Dendritic cell treated with granulocyte-macrophage colony-stimulating factor and Interleukin-4, amounts not matched to agents 40 ng/mL and 50 ng/mL, for 4 days (primary cell): ENCODE measurements at regions of chr14 and their contacts with region 1.

Region 1: GRCh38 chr14:81710234-81710845 is 176.7 kb upstream of the SEL1L start:
- H3K4me3 Mint-ChIP-seq: no peak overlapping the region
- H3K27ac Mint-ChIP-seq: no peak overlapping the region
- H3K4me1 Mint-ChIP-seq: no peaks in the 10 kb centered on the region
- H3K27me3 Mint-ChIP-seq: no peaks in the 10 kb centered on the region

Region 2: DNA sequence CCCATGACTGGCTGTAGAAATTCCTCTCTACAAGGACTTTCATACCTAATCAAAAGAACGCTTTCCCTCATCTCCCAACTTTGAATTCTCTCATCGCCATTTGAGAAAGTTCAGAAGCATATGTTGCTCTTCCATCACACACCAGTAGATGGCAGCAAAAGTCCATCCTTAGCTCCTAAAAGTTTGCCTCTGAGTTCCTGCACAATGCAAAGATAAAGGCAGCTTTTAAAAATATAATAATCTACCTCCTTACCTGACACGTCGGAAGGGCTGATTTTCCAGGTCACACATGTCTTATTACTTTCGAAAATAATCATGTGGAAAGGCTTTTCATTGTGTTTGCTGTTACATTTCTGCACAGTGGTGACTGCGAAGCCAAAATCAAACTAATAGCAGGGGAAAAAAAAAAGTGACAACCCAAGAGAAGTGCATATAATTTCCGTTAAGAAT is 280.0 kb after region 1 on chr14:
- intact Hi-C with region 1: loop called (anchors 1 kb)
- H3K4me3 Mint-ChIP-seq: no peak overlapping the region
- H3K27ac Mint-ChIP-seq: no peak overlapping the region
- H3K4me1 Mint-ChIP-seq: peaks cover 7% of the 10 kb centered on the region
- H3K27me3 Mint-ChIP-seq: no peaks in the 10 kb centered on the region

Region 3: DNA sequence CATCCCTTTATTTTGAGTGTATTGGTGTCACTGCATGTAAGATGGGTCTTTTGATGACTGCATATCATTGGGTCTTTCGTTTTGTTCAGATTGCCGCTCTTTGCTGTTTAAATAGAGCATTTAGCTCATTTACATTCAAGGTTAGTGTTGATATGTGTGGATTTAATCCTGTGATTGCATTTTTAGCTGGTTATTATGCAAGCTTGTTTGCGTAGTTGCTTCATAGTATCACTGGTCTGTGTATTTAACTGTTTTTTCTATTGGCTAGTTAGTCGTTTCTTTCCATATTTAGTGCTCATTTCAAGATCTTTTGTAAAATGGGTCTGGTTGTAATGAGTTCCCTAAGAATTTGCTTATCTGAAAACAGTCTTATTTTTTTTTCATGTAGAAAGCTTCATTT is 993.9 kb after region 1 on chr14:
- intact Hi-C with region 1: loop called (anchors 10 kb)
- H3K4me3 Mint-ChIP-seq: no peak overlapping the region
- H3K27ac Mint-ChIP-seq: no peak overlapping the region
- H3K4me1 Mint-ChIP-seq: no peaks in the 10 kb centered on the region
- H3K27me3 Mint-ChIP-seq: no peaks in the 10 kb centered on the region